HCT116 (cell line): ENCODE measurements at regions of chr11 and their contacts with region 1.

Region 1: DNA sequence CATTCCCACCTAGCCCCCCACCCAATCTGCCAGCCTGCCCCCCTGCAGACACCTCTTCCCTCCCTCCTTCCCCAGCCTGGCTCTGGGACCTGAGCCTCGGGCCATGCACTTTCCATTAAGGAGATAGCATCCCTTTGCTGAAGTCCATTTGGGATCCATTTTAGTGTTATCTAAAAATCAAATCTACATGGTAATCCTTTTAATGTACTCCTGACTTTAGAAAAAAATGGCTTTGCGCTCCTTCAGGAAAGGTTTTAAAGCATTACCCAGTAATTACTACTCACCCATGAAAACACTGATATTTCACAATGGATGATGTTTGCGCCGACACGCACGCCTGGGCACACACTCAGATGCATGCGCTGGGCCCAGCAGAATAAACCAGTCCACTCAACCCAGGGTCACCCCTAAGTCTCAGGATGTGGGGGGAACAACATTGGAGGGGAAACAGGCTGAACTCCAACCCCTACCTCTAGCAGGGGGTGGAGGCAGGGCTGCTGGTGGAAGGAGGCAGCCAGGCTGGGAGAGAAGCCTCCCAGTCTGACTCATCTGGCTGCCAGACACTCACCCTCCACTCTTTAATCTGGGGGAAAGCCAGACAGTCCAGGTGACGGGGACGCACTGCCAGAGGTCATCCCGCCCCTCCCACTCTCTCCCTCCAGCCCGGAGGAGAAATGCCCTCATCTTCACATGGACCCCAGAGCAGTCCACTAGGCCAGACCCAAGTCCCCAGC is 29.8 kb downstream of the LMO1 start:
- DNase-seq: no peak
- ATAC-seq: peak; percentile 46
- H3K4me3 ChIP-seq: no peak overlapping the region
- H3K27ac ChIP-seq: no peak overlapping the region; the same call in 1 of the 2 replicates
- H3K4me1 ChIP-seq: peaks cover 9 to 14% of the 10 kb centered on the region in 2 experiments; a peak in 3 of 4 replicates
- H3K27me3 ChIP-seq: no peaks in the 10 kb centered on the region
- CTCF ChIP-seq: no peak
- POLR2A ChIP-seq: no peak
- RAD21 ChIP-seq: no peak

Region 2: GRCh38 chr11:8247312-8247711 is 13.5 kb after region 1 on chr11:
- CTCF ChIA-PET with region 1: interaction called, 13 read pairs
- POLR2A ChIA-PET with region 1: no interaction called
- RAD21 ChIA-PET with region 1: no interaction called
- intact Hi-C with region 1: no loop called
- DNase-seq: no peak
- ATAC-seq: peak; percentile 91
- H3K4me3 ChIP-seq: no peak overlapping the region
- H3K27ac ChIP-seq: no peak overlapping the region
- H3K4me1 ChIP-seq: peaks cover 0 to 11% of the 10 kb centered on the region in 2 experiments; a peak in 2 of 4 replicates
- H3K27me3 ChIP-seq: no peaks in the 10 kb centered on the region
- CTCF ChIP-seq: peak; percentile 63 to 81 (median 72); a peak in 5 of 6 replicates
- POLR2A ChIP-seq: no peak
- RAD21 ChIP-seq: peak; percentile 78

Region 3: DNA sequence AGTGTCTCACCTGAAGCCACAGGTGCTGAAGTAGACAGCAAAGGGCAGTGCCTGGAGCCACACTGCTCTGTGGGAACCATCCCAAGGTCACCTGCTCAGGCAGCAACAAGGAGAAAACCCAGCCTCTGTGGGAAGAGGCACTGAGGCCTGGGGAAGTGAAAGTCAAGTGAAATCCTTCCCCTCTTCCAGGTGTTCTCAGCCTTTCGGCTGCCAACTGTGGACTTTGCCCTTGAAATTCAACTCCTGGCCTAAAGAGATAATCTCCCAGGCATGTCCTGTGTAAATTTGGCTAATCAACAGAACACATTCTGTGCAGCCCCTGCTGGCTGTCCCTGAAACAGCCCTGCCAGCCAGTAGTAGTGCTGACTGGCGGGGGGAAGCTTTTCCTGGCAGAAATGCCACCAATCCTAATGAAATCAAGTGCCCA is 560.8 kb after region 1 on chr11:
- CTCF ChIA-PET with region 1: no interaction called
- POLR2A ChIA-PET with region 1: no interaction called
- RAD21 ChIA-PET with region 1: no interaction called
- intact Hi-C with region 1: no loop called
- DNase-seq: peak; percentile 12
- ATAC-seq: peak; percentile 92
- H3K4me3 ChIP-seq: no peak overlapping the region
- H3K27ac ChIP-seq: no peak overlapping the region
- H3K4me1 ChIP-seq: peaks cover 12 to 14% of the 10 kb centered on the region in 2 experiments; a peak in 3 of 4 replicates
- H3K27me3 ChIP-seq: no peaks in the 10 kb centered on the region
- CTCF ChIP-seq: peak; percentile 30 to 72 (median 69); a peak in 5 of 6 replicates
- POLR2A ChIP-seq: no peak
- RAD21 ChIP-seq: peak; percentile 66